Colonic mucosa (tissue), 4 donors: ENCODE measurements at regions of chr10 and their contacts with region 1.

Region 1: GRCh38 chr10:80662577-80663261 is 125.0 kb downstream of the SH2D4B start:
- DNase-seq: peak; percentile 85
- H3K4me3 ChIP-seq: no peak overlapping the region
- H3K27ac ChIP-seq: no peak overlapping the region
- H3K4me1 ChIP-seq: no peaks in the 10 kb centered on the region
- H3K27me3 ChIP-seq: no peaks in the 10 kb centered on the region
- CTCF ChIP-seq: peak; percentile 90

Region 2: DNA sequence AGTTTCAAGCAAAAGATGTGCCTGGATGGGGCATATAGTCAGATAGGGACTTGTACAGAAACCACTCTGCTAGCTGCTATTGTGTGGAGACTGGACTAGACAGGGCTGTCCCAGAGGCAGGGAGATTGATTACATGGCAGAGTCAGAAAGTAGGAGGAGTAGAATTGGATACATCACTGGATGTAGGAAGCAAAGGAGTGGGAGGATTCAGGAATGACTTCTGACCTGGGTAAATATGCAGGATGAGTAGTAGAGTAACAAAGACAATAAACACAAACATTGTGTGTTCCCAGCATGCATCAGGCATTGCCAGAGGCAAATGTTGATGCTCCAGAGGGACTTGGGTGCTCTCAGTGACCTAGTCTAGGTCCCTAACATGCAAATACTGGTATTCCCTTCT is 342.3 kb before region 1 on chr10:
- intact Hi-C with region 1: no loop called
- DNase-seq: no peak
- H3K4me3 ChIP-seq: no peak overlapping the region
- H3K27ac ChIP-seq: no peak overlapping the region
- H3K4me1 ChIP-seq: no peaks in the 10 kb centered on the region
- H3K27me3 ChIP-seq: no peaks in the 10 kb centered on the region
- CTCF ChIP-seq: no peak

Region 3: GRCh38 chr10:80699602-80700039 is 36.9 kb after region 1 on chr10:
- intact Hi-C with region 1: loop called (anchors 5 kb)
- DNase-seq: peak; percentile 82
- H3K4me3 ChIP-seq: no peak overlapping the region
- H3K27ac ChIP-seq: no peak overlapping the region
- H3K4me1 ChIP-seq: no peaks in the 10 kb centered on the region
- H3K27me3 ChIP-seq: no peaks in the 10 kb centered on the region
- CTCF ChIP-seq: peak; percentile 78

Region 4: GRCh38 chr10:80924063-80924952 is 261.6 kb after region 1 on chr10:
- intact Hi-C with region 1: loop called (anchors 5 kb)
- DNase-seq: peak; percentile 63
- H3K4me3 ChIP-seq: no peak overlapping the region
- H3K27ac ChIP-seq: no peak overlapping the region
- H3K4me1 ChIP-seq: no peaks in the 10 kb centered on the region
- H3K27me3 ChIP-seq: no peaks in the 10 kb centered on the region
- CTCF ChIP-seq: peak; percentile 61

Region 5: GRCh38 chr10:81018708-81019365 is 356.1 kb after region 1 on chr10:
- intact Hi-C with region 1: loop called (anchors 10 kb)
- DNase-seq: no peak
- H3K4me3 ChIP-seq: no peak overlapping the region
- H3K27ac ChIP-seq: no peak overlapping the region
- H3K4me1 ChIP-seq: no peaks in the 10 kb centered on the region
- H3K27me3 ChIP-seq: no peaks in the 10 kb centered on the region
- CTCF ChIP-seq: peak; percentile 72